Uterus (tissue), 4 donors: ENCODE measurements at regions of chr7 and their contacts with region 1.

Region 1: DNA sequence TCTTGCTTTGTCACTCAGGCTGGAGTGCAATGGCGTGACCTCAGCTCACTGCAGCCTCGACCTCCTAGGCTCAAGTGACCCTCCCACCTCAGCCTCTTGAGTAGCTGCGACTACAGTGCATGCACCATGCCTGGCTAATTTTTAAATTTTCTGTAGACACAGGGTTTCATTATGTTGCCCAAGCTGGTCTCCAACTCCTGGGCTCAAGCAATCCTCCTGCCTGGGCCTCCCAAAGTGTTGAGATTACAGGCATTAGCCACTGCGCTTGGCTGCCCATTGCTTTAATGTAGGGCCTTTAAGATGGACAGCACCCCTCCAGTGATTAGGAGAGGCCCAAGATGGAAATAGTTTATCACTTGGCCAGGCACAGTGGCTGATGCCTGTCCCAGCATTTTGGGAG is 39.4 kb downstream of the NIPSNAP2 start:
- DNase-seq: no peak
- H3K4me3 ChIP-seq: no peak overlapping the region
- H3K27ac ChIP-seq: no peak overlapping the region
- H3K4me1 ChIP-seq: no peaks in the 10 kb centered on the region
- H3K27me3 ChIP-seq: no peaks in the 10 kb centered on the region
- CTCF ChIP-seq: no peak
- POLR2A ChIP-seq: no peak

Region 2: DNA sequence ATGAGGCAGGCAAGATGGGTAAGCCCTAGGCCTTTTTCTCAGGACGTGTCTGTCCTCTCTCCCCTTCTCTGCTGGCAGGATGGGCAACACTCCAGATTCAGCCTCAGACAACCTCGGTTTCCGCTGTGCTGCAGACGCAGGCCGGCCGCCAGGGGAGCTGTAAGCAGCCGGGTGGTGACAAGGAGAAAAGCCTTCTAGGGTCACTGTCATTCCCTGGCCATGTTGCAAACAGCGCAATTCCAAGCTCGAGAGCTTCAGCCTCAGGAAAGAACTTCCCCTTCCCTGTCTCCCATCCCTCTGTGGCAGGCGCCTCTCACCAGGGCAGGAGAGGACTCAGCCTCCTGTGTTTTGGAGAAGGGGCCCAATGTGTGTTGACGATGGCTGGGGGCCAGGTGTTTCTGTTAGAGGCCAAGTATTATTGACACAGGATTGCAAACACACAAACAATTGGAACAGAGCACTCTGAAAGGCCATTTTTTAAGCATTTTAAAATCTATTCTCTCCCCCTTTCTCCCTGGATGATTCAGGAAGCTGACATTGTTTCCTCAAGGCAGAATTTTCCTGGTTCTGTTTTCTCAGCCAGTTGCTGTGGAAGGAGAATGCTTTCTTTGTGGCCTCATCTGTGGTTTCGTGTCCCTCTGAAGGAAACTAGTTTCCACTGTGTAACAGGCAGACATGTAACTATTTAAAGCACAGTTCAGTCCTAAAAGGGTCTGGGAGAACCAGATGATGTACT is 75.9 kb after region 1 on chr7:
- intact Hi-C with region 1: loop called (anchors 5 kb)
- DNase-seq: peak; percentile 53 to 60
- H3K4me3 ChIP-seq: no peak overlapping the region
- H3K27ac ChIP-seq: peak overlapping the region; percentile 10 to 73
- H3K4me1 ChIP-seq: peaks cover 0 to 5% of the 10 kb centered on the region in 2 donors
- H3K27me3 ChIP-seq: no peaks in the 10 kb centered on the region
- CTCF ChIP-seq: peak; percentile 16 to 60 (median 42)
- POLR2A ChIP-seq: no peak